ENCODE measurements at regions of chr20 and their contacts with region 1.

Region 1: GRCh38 chr20:59087829-59088433 is 45.3 kb upstream of the PRELID3B start:
- DNase-seq: peak; percentile 66 to 70
- ATAC-seq: peak; percentile 89 to 97; a peak in 5 of 6 replicates
- H3K4me3 ChIP-seq: no peak overlapping the region
- H3K27ac ChIP-seq: no peak overlapping the region
- H3K4me1 ChIP-seq: no peaks in the 10 kb centered on the region
- CTCF ChIP-seq: peak; percentile 84
- EP300 ChIP-seq: no peak
- POLR2A ChIP-seq: no peak
- RAD21 ChIP-seq: peak; percentile 83 to 88

Region 2: GRCh38 chr20:59040667-59041309 is 47.1 kb before region 1 on chr20:
- CTCF ChIA-PET with region 1: no interaction called
- POLR2A ChIA-PET with region 1: no interaction called
- DNase-seq: no peak
- ATAC-seq: no peak
- H3K4me3 ChIP-seq: peak overlapping the region; percentile 86; the same call in 2 of the 3 replicates
- H3K27ac ChIP-seq: no peak overlapping the region
- H3K4me1 ChIP-seq: peaks cover 34% of the 10 kb centered on the region
- CTCF ChIP-seq: no peak
- EP300 ChIP-seq: no peak
- POLR2A ChIP-seq: no peak
- RAD21 ChIP-seq: no peak

Region 3: DNA sequence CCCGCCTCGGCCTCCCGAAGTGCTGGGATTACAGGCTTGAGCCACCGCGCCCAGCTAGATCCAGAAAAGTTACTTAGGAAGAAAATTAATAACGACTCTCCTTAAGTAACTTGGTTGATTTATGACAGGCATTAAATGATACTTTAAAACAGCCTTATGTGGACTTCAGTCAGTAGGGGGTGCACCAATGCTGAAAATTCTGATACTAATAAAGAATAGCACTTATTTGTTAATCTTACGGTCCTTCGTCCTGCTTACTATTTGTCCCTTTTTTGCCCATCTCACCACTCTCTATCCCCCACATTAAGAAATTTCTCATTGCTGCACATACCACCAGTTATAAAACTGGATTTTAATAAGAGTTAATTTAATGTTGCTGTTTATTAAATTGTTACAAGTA is 32.6 kb before region 1 on chr20:
- CTCF ChIA-PET with region 1: interaction called, 14 read pairs
- POLR2A ChIA-PET with region 1: no interaction called
- DNase-seq: peak in 1 of 2 experiments; percentile 30
- ATAC-seq: peak in 1 of 2 experiments; percentile 43; a peak in 1 of 6 replicates
- H3K4me3 ChIP-seq: no peak overlapping the region
- H3K27ac ChIP-seq: no peak overlapping the region
- H3K4me1 ChIP-seq: no peaks in the 10 kb centered on the region
- CTCF ChIP-seq: peak; percentile 49; the same call in 2 of the 3 replicates
- EP300 ChIP-seq: no peak
- POLR2A ChIP-seq: no peak
- RAD21 ChIP-seq: peak; percentile 51 to 52; a peak in 3 of 5 replicates

Region 4: DNA sequence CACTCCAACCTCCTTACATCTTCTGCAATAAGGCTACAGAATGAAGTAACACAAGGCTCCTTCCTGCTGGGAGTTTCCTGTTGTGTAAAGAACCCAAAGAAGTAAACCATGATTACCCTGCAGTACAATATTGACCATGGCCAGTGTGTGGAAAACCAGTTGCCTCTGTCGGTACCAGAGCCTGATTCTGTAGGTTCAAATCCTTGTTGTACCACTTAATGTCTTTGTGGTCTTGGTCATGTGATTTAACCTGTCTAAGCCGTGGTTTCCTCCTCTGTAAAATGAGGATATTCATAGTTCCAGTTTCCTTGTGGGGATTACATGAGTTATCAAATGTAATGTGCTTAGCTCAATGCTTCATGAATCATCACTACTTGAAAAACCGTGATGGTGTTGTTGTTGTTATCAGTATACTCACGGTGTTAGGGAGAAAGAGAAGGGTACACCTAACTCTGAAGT is 14.9 kb after region 1 on chr20:
- CTCF ChIA-PET with region 1: interaction called, 22 read pairs
- POLR2A ChIA-PET with region 1: interaction called, 6 read pairs
- DNase-seq: no peak
- ATAC-seq: no peak
- H3K4me3 ChIP-seq: no peak overlapping the region
- H3K27ac ChIP-seq: no peak overlapping the region
- H3K4me1 ChIP-seq: no peaks in the 10 kb centered on the region
- CTCF ChIP-seq: no peak
- EP300 ChIP-seq: no peak
- POLR2A ChIP-seq: no peak
- RAD21 ChIP-seq: no peak

Region 5: DNA sequence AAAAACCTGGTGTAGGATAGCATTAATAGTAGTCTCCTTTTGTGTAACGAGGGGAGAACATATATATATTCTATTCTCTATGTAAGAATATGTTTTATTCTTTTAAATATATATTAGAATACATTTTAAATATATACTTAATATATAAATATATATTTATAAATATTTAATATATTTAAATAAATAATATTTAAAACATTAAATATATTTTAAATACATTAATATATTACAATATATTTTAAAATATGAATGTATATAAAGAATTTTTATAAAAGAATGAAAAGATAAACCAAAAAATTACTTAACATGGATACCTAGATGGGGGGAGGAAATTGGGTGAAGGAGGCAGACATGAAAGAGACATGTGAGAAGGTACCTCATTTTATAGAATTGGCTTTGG is 22.7 kb after region 1 on chr20:
- CTCF ChIA-PET with region 1: interaction called, 12 read pairs
- POLR2A ChIA-PET with region 1: no interaction called
- DNase-seq: no peak
- ATAC-seq: no peak
- H3K4me3 ChIP-seq: no peak overlapping the region
- H3K27ac ChIP-seq: no peak overlapping the region
- H3K4me1 ChIP-seq: no peaks in the 10 kb centered on the region
- CTCF ChIP-seq: no peak
- EP300 ChIP-seq: no peak
- POLR2A ChIP-seq: no peak
- RAD21 ChIP-seq: no peak

Region 6: GRCh38 chr20:59222253-59223181 is 134.6 kb after region 1 on chr20:
- CTCF ChIA-PET with region 1: interaction called, 17 read pairs
- POLR2A ChIA-PET with region 1: no interaction called
- DNase-seq: peak; percentile 77
- ATAC-seq: peak; percentile 92 to 99
- H3K4me3 ChIP-seq: peak overlapping the region; percentile 51
- H3K27ac ChIP-seq: peak overlapping the region; percentile 81 to 91
- H3K4me1 ChIP-seq: peaks cover 6% of the 10 kb centered on the region; the same call in 2 of the 3 replicates
- CTCF ChIP-seq: peak; percentile 90
- EP300 ChIP-seq: no peak
- POLR2A ChIP-seq: no peak
- RAD21 ChIP-seq: peak; percentile 80 to 92

Region 7: DNA sequence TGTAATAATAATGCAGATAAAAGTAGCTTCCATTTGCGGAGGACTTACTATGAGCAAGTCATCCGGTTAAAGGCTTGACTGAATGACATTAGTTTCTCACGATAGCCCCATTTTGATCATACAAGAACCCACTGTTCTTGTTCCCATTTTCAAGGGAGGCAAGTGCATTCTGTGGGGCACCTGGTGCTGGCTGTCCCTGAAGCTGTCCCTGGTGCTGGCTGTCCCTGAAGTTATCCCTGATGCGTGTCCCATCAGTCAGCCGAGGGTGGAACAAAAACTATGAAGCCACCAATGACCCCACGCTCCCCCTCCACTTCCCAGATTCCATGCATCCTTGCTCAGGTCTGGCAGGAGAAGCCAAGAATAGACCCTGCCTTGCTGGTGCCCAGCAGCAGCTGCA is 307.8 kb after region 1 on chr20:
- CTCF ChIA-PET with region 1: interaction called, 10 read pairs
- POLR2A ChIA-PET with region 1: no interaction called
- DNase-seq: no peak
- ATAC-seq: no peak
- H3K4me3 ChIP-seq: no peak overlapping the region
- H3K27ac ChIP-seq: no peak overlapping the region
- H3K4me1 ChIP-seq: peaks cover 11% of the 10 kb centered on the region; the same call in 2 of the 3 replicates
- CTCF ChIP-seq: no peak
- EP300 ChIP-seq: no peak
- POLR2A ChIP-seq: no peak
- RAD21 ChIP-seq: no peak

Measured in A549 (cell line).